ENCODE measurements at regions of chr11 and their contacts with region 1.

Region 1: GRCh38 chr11:2975594-2975993 is 16.5 kb downstream of the NAP1L4 start:
- DNase-seq: peak; percentile 57
- ATAC-seq: peak; percentile 94
- H3K4me3 Mint-ChIP-seq: no peak overlapping the region
- H3K27ac Mint-ChIP-seq: peak overlapping the region; percentile 8
- H3K4me1 Mint-ChIP-seq: peaks cover 44% of the 10 kb centered on the region
- H3K27me3 Mint-ChIP-seq: no peaks in the 10 kb centered on the region
- CTCF ChIP-seq: peak; percentile 59

Region 2: DNA sequence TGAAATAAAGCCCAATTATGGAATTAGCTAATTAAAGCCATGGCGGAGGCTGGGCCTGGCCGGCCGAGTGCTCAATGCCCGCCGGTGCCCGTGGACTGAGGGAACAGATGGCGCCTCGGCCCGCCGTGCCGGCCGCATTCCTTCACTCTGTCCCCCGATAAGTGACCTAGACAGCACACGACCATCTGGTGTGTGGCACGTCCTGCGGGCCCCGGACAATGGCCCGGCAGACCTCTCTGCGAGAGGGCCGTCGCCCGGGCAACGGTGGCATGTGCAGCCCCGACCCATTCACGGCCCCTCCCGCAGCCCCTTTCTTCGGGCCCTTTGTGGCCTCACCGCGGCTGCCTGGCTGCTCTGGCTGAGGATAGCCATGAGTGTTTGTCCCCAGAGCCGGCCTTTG is 125.2 kb before region 1 on chr11:
- CTCF ChIA-PET with region 1: no interaction called
- POLR2A ChIA-PET with region 1: no interaction called
- intact Hi-C with region 1: no loop called
- DNase-seq: no peak
- ATAC-seq: no peak
- H3K4me3 Mint-ChIP-seq: no peak overlapping the region
- H3K27ac Mint-ChIP-seq: no peak overlapping the region
- H3K4me1 Mint-ChIP-seq: no peaks in the 10 kb centered on the region
- H3K27me3 Mint-ChIP-seq: no peaks in the 10 kb centered on the region
- CTCF ChIP-seq: no peak

Region 3: DNA sequence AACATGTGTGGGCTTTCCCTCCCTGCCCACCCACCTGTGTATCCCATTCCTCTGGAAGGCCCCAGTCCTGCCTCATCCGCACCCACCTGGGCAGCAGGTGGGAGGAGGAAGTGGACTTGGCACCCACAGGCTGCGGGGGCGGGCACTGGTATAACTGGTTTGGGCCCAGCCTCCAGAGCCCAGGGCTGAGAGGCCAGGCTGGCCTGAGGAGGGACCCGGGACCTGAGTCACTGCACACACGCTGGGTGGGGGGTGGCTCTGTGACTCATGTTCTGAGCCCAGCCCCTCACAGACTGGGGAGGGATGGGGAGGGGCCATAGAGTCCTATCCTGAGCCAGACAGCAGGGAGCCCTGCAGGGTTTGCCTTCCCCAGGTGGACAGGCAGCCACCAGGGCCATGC is 63.1 kb before region 1 on chr11:
- CTCF ChIA-PET with region 1: no interaction called
- POLR2A ChIA-PET with region 1: no interaction called
- intact Hi-C with region 1: no loop called
- DNase-seq: no peak
- ATAC-seq: peak; percentile 53
- H3K4me3 Mint-ChIP-seq: no peak overlapping the region
- H3K27ac Mint-ChIP-seq: no peak overlapping the region
- H3K4me1 Mint-ChIP-seq: peaks cover 7% of the 10 kb centered on the region
- H3K27me3 Mint-ChIP-seq: no peaks in the 10 kb centered on the region
- CTCF ChIP-seq: no peak

Region 4: DNA sequence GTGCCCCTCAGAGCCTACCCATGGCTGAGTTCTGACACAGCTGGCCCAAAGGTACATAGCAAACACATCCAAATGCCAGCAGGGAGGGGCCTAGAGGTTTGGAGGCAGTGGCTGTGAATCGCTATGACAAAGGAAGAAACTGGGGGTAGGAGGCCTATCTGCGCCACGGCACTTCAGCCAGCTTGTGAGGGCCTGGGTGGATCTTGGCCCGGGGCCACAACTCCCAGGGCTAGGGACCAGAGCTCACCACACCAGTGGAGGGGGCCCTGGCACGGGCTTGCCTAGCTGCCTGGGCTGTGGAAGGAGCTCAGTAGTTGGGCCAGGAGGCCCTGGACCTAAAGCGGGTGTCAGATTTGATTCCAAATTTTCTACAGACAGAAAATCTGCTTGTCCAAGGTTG is 25.9 kb after region 1 on chr11:
- CTCF ChIA-PET with region 1: interaction called, 10 read pairs
- POLR2A ChIA-PET with region 1: interaction called, 6 read pairs
- intact Hi-C with region 1: no loop called
- DNase-seq: no peak
- ATAC-seq: no peak
- H3K4me3 Mint-ChIP-seq: no peak overlapping the region
- H3K27ac Mint-ChIP-seq: no peak overlapping the region
- H3K4me1 Mint-ChIP-seq: peaks cover 10% of the 10 kb centered on the region
- H3K27me3 Mint-ChIP-seq: no peaks in the 10 kb centered on the region
- CTCF ChIP-seq: no peak

Region 5: DNA sequence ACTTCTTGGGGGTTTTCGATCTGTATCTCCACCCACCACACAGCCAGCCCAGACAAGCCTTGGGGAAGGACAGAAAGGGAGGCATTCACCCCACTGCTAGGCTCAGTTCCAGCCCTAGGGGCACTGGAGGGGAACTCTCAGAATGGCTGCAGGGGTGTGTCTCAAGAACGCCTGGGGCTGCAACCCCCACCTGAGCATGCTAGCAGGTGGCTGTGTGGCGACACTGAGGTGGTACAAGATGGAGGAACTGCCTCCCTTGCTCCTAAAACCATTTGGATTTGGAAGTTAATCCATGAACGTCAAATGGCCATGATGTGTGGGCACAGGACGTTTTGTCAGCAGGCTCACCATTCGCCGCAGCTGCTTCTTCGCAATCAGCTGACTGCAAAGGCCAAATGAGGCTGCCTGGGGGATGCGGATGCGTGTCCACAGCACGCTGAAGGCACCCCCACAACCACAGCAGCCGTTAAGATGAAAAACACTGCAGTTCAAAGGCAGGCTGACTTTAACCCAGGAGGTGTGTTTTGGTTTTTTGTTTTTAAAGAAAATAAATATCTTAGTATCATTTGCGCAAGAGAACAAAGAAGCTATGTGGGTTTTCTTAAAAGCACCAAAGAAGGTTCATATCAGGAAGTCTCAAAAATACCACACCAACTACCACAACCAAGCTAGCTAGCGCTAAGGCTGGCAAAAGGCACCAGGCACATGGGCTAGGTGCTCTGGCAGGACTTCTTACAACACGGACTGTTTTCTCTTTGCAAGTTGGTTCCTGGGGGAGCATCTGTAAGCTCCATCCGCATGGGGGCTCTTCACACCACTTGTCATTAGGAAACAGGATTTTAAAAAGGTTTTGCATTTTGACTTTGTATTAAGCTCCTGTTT is 38.7 kb after region 1 on chr11:
- CTCF ChIA-PET with region 1: interaction called, 21 read pairs
- POLR2A ChIA-PET with region 1: interaction called, 11 read pairs
- intact Hi-C with region 1: loop called (anchors 5 kb)
- DNase-seq: peak; percentile 92
- ATAC-seq: peak; percentile 79
- H3K4me3 Mint-ChIP-seq: peak overlapping the region; percentile 31
- H3K27ac Mint-ChIP-seq: peak overlapping the region; percentile 91
- H3K4me1 Mint-ChIP-seq: peaks cover 70% of the 10 kb centered on the region
- H3K27me3 Mint-ChIP-seq: no peaks in the 10 kb centered on the region
- CTCF ChIP-seq: peak; percentile 23

Measured in activated CD8-positive, alpha-beta T cell treated with anti-CD3 and anti-CD28 coated beads for 36 hours (primary cell).